ENCODE measurements at regions of chr11 and their contacts with region 1.

Region 1: GRCh38 chr11:65779851-65780577 is 762 bp downstream of the AP5B1 start:
- DNase-seq: peak; percentile 87
- H3K4me3 ChIP-seq: peak overlapping the region; percentile 62 to 70
- H3K27ac ChIP-seq: peak overlapping the region in 1 of 2 experiments; percentile 35; a peak in 2 of 4 replicates
- H3K4me1 ChIP-seq: peaks cover 0 to 13% of the 10 kb centered on the region in 2 experiments; a peak in 1 of 4 replicates
- H3K27me3 ChIP-seq: no peaks in the 10 kb centered on the region
- CTCF ChIP-seq: peak; percentile 71
- EP300 ChIP-seq: no peak
- RAD21 ChIP-seq: peak; percentile 12; the same call in 1 of the 2 replicates

Region 2: DNA sequence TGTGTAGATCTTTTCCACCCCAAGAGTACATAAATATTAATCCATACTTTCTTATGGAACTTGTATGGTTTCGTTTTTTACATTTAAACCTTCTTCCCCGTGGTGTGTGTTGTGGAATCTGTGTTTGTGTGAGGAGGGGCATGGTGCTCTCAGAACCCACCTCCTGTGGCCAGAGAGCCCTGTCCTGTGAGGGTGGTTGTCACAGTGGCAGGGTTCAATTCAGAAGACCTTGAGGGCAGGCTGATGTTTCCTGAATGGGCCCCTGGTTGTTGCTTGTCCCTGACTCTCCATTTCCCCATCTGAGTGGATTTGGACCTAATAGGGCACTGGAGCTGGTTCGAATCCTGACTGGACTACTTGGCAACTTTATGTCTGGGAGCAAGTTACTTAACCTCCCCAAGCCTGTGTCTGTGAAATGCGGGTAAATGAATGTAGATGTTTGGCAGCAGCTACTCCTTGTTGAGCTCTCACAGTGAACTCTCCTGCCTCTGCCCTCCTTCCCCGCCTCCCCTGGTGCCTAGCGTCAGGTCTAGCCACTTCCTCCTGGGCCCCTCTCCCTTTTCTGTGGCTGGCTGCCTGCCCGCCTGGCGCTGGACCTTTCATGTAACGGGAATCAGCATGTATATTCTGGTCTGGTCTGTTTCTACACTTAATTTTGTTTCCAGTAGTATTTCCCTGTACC is 350.1 kb before region 1 on chr11:
- CTCF ChIA-PET with region 1: no interaction called
- POLR2A ChIA-PET with region 1: no interaction called
- DNase-seq: no peak
- H3K4me3 ChIP-seq: peak overlapping the region; percentile 77 to 83
- H3K27ac ChIP-seq: peak overlapping the region; percentile 100
- H3K4me1 ChIP-seq: peaks cover 4 to 39% of the 10 kb centered on the region in 2 experiments; a peak in 2 of 4 replicates
- H3K27me3 ChIP-seq: no peaks in the 10 kb centered on the region
- CTCF ChIP-seq: no peak
- EP300 ChIP-seq: no peak
- RAD21 ChIP-seq: no peak

Region 3: DNA sequence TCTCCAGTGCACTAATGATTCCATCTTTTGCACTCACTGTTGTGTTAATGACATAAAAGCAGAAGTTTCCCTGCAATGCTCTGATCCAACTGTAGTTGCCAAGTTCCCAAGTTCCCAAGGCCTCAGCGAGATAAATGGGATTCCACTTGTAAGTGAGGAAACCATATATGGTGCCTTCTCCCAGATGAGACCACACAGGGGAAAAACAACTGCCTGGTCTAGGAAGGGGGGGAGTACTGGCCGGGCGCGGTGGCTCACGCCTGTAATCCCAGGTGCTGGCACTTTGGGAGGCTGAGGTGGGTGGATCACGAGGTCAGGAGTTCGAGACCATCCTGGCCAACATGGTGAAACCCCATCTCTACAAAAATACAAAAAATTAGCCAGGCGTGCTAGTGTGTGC is 94.0 kb before region 1 on chr11:
- CTCF ChIA-PET with region 1: no interaction called
- POLR2A ChIA-PET with region 1: no interaction called
- DNase-seq: no peak
- H3K4me3 ChIP-seq: no peak overlapping the region
- H3K27ac ChIP-seq: no peak overlapping the region
- H3K4me1 ChIP-seq: no peaks in the 10 kb centered on the region
- H3K27me3 ChIP-seq: peaks cover 9% of the 10 kb centered on the region
- CTCF ChIP-seq: no peak
- EP300 ChIP-seq: no peak
- RAD21 ChIP-seq: no peak

Region 4: DNA sequence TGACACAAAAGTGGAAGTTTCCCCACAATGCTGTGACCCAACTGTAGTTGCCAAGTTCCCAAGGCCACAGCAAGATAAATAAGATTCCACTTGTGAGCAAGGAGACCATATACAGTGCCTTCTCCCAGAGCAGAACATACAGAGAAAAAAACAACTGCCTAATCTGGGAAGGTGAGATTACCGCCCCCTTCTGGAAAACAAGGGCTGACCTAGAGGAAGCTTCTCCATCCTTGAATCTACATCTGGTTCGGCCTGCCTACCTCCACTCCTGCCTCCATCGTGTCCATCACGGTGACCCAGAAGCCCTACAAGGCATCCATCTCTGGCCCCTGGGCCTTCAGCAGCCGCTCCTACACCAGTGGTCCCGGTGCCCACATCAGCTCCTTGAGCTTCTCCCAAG is 53.4 kb before region 1 on chr11:
- CTCF ChIA-PET with region 1: interaction called, 10 read pairs
- POLR2A ChIA-PET with region 1: no interaction called
- DNase-seq: no peak
- H3K4me3 ChIP-seq: no peak overlapping the region
- H3K27ac ChIP-seq: no peak overlapping the region
- H3K4me1 ChIP-seq: no peaks in the 10 kb centered on the region
- H3K27me3 ChIP-seq: no peaks in the 10 kb centered on the region
- CTCF ChIP-seq: peak; percentile 15; the same call in 1 of the 2 replicates
- EP300 ChIP-seq: no peak
- RAD21 ChIP-seq: no peak

Region 5: DNA sequence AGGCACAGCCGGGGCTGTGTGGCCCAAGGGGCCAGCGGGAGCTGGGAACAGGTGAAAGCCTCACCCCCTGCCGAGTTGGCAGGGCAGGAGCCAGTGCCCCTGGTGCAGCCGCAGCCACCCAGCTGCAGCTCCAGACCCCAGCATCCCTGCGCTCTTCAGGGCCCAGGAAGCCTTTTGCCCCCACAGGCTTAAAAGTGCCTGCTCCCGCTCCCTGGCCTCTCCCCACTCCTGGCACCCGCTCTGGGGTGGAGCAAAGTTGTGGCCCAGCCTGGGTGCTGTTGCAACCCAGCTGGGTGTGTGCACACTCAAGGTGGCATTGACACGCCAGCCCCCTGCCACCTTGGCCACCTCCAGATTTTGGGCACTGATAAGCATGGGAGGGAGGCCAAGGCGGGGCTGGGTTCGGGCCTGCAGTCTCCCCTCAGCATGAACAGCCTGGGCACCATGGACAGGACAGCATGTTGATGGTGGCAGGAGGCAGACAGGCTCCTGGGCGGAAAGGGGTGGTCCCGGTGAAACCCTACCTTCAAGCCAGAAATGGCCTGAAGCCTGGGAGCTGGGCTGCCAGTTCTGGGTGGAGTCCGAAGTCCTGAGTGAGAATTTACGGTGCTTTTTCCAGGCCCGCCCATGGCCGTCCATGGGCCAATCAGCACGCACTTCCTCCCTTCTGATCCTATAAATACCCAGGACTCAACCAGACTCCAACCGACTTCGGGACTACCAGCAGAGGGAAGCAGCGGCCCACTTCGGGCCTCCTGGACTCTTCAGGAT is 35.9 kb before region 1 on chr11:
- CTCF ChIA-PET with region 1: interaction called, 59 read pairs
- POLR2A ChIA-PET with region 1: no interaction called
- DNase-seq: peak; percentile 73
- H3K4me3 ChIP-seq: no peak overlapping the region
- H3K27ac ChIP-seq: no peak overlapping the region
- H3K4me1 ChIP-seq: peaks cover 0 to 10% of the 10 kb centered on the region in 2 experiments; a peak in 1 of 4 replicates
- H3K27me3 ChIP-seq: peaks cover 10% of the 10 kb centered on the region; the same call in 1 of the 2 replicates
- CTCF ChIP-seq: peak; percentile 49
- EP300 ChIP-seq: no peak
- RAD21 ChIP-seq: peak; percentile 69

Region 6: DNA sequence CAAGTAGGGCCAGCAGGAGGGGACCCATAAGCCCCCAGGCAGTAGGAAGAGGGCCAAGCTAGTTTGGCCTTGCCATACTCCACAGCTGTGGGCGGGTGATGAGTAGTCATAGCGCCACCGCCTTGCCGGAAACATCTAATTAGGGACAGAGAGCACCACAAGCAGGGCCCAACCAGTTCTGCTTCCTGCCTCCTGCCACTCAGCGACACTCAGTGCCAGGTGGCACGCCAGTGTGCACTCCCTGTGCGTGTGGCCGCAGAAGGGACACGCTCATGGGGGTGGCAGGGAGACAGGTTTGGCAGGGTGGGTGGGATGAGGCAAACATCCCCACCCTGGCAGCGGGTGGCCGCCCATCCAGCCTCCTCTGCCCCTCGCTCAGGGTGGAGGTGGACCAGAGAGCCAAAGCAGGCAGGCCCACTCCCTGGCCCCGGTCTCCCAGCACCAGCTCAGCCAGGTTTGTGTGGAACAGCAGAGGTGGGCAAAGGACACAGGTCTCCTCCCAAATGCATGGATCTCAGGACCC is 11.7 kb after region 1 on chr11:
- CTCF ChIA-PET with region 1: interaction called, 152 read pairs
- POLR2A ChIA-PET with region 1: no interaction called
- DNase-seq: peak; percentile 33
- H3K4me3 ChIP-seq: no peak overlapping the region
- H3K27ac ChIP-seq: no peak overlapping the region
- H3K4me1 ChIP-seq: no peaks in the 10 kb centered on the region; a peak in 1 of 4 replicates
- H3K27me3 ChIP-seq: peaks cover 27% of the 10 kb centered on the region
- CTCF ChIP-seq: no peak
- EP300 ChIP-seq: no peak
- RAD21 ChIP-seq: no peak

Region 7: DNA sequence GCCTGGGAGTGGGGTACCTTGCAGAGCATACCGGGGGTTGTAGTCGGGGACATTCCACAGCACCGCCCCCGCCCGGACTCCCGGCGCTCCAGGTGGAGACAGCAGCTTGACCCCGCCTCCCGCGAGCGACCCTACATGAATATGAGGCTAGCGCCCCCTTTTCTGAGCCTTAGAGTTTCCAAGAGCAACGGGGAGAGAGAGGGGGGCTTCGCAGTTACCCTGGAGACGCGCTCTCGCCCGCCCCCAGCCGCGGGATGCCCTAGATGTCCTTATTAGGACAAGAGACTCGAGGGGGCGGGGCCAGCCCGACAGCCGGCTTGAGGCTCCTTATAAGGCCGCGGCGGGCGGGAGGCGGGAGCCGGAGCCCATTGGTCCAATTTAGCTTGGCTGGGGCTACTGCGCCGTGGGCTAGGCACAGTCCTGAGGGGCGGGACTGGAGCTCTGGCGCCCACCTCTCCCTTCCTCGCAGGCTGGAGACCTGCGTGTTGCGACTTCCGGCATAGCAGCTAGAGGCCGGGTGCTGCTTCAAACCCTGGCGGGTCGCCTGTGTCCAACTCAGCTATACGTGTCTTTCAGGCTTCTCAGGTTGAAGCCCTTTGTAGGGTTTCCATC is 79.3 kb after region 1 on chr11:
- CTCF ChIA-PET with region 1: interaction called, 11 read pairs
- POLR2A ChIA-PET with region 1: no interaction called
- DNase-seq: peak; percentile 90
- H3K4me3 ChIP-seq: peak overlapping the region; percentile 97 to 99
- H3K27ac ChIP-seq: peak overlapping the region; percentile 93
- H3K4me1 ChIP-seq: peaks cover 10 to 29% of the 10 kb centered on the region in 2 experiments
- H3K27me3 ChIP-seq: no peaks in the 10 kb centered on the region
- CTCF ChIP-seq: peak; percentile 25; the same call in 1 of the 2 replicates
- EP300 ChIP-seq: peak in 1 of 2 experiments; percentile 20; a peak in 1 of 4 replicates
- RAD21 ChIP-seq: no peak

Region 8: GRCh38 chr11:66282468-66283386 is 502.7 kb after region 1 on chr11:
- CTCF ChIA-PET with region 1: no interaction called
- POLR2A ChIA-PET with region 1: no interaction called
- DNase-seq: peak; percentile 98
- H3K4me3 ChIP-seq: peak overlapping the region in 1 of 2 experiments; percentile 48; a peak in 2 of 4 replicates
- H3K27ac ChIP-seq: peak overlapping the region; percentile 47 to 57; a peak in 3 of 4 replicates
- H3K4me1 ChIP-seq: peaks cover 0 to 55% of the 10 kb centered on the region in 2 experiments; a peak in 1 of 4 replicates
- H3K27me3 ChIP-seq: no peaks in the 10 kb centered on the region
- CTCF ChIP-seq: peak; percentile 95
- EP300 ChIP-seq: no peak
- RAD21 ChIP-seq: peak; percentile 66

Measured in SK-N-SH (cell line).